Mammary epithelial cell (primary cell): ENCODE measurements at regions of chr11 and their contacts with region 1.

Region 1: DNA sequence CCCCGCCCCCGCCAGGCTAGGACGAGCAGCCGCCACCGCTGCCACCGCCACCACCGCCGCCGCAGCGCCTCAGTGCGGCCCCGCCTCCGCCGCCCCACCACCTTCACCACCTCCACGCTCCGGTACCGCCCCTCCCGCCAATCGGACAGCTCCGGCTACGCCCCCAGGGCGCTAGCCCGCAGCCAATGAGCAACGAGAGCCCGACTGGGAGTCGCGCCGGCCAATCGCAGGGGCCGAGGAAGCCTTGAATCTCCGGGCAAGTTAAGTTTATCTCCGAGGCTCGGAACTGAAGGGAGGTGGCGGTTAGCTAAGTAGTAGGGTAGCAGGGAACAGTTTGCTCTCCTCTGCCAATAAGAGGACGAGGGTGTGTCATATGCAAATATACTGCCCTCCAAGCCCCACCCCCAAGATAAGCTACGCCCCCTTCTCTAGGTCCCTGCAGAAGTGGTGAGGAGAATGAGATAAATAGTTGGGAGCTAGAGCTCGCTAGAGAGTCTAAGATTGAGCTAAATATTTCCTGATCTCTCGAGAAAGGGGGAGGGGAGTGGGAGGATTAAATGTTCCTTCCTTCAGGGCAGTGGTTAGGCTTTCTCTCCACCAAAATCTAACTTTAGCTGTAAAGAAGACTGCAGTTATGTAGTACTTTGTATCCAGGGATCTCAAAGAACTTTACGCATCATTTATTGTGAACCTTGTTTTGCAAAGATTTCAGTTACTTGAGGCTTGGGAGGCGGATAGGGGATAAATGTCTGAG is at the start of gene SESN3:
- DNase-seq: peak; percentile 100
- H3K4me3 ChIP-seq: peak within 1 kb of the TSS; percentile 73 to 93 (median 92)
- H3K27ac ChIP-seq: peak within 1 kb of the TSS; percentile 64
- H3K4me1 ChIP-seq: peaks cover 20% of the 10 kb centered on the region
- H3K27me3 ChIP-seq: no peaks in the 10 kb centered on the region
- CTCF ChIP-seq: peak in 1 of 2 donors; percentile 30
- total RNA-seq, gene SESN3: 36.5 to 184 TPM

Region 2: DNA sequence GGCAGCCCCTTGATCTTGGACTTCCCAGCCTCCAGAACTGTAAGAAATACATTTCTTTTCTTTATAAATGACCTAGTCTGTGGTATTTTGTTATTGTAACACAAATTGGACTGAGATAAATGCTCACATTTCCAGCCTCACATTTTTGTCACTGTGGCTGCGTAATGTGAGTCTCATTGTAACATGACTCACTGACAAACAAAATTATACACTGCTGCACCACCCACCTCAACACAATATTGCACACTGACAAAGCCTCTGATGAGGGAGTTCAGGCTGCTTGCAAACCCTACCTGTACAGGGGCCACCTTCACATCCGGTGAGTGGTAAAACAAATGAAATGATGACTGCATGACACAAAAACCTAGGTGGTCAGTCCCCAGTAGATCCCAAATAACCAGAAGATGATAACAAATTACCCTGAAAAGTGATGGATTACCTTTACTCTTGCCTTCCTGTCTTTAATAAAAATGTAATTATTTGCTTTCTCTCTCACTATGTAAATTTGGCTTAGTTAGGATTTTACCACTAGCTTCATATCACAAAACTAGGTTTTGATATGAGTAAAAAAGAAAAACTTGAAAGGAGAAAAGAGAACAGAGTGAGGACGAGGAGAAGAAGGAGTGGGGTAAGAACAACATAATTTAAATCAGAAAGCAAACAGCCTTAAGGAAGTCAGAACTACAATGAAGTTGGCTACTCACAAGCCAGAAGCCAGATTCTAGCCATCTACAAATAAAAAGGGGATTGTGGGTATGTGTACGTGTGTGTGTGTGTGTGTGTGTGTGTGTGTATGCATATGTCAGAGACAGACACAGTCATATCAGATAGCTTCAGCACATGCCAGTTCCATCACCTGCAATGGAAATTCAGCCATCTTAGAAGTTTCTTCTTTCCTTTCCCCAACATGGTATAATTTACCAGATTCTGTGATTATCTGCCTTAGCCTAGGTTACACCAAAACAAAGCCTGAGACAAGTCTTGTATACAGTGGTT is 53.1 kb after region 1 on chr11:
- CTCF ChIA-PET with region 1: no interaction called
- dilution Hi-C with region 1: no loop called
- in situ Hi-C with region 1: no loop called
- intact Hi-C with region 1: loop called (anchors 5 kb)
- DNase-seq: peak; percentile 36
- H3K4me3 ChIP-seq: no peak overlapping the region
- H3K27ac ChIP-seq: no peak overlapping the region
- H3K4me1 ChIP-seq: peaks cover 26% of the 10 kb centered on the region
- H3K27me3 ChIP-seq: no peaks in the 10 kb centered on the region
- CTCF ChIP-seq: no peak

Region 3: DNA sequence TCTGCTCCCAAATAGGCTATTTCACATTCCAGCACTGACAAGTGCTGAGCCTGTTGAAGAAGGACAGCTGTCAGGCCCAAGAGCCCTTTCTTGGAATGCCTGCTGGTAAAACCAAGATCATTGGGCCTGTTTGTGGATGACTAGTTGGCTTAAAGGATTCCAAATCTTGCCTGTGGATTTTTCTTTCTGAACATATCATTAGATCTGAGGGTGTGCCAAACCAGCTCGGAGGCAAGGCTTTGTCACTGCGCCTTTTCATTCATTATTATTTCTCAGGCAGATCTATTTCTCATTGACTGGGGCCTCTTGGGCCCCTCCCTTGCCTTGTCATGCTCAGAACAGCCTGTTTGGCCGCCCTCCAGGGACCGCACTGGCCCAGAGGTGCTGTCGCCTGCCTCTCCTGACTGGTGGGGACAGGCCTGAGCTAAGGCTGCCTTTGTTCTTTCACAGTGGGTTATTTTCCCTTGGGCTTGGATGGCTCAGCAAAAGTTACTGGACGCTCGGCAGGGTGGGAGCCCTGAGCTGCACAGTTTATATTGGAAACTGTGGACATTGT is 222.4 kb after region 1 on chr11:
- CTCF ChIA-PET with region 1: no interaction called
- dilution Hi-C with region 1: no loop called
- in situ Hi-C with region 1: no loop called
- intact Hi-C with region 1: loop called (anchors 2 kb)
- DNase-seq: peak; percentile 91
- H3K4me3 ChIP-seq: no peak overlapping the region
- H3K27ac ChIP-seq: peak overlapping the region; percentile 53
- H3K4me1 ChIP-seq: peaks cover 34% of the 10 kb centered on the region
- H3K27me3 ChIP-seq: no peaks in the 10 kb centered on the region
- CTCF ChIP-seq: peak in 1 of 2 donors; percentile 1

Region 4: DNA sequence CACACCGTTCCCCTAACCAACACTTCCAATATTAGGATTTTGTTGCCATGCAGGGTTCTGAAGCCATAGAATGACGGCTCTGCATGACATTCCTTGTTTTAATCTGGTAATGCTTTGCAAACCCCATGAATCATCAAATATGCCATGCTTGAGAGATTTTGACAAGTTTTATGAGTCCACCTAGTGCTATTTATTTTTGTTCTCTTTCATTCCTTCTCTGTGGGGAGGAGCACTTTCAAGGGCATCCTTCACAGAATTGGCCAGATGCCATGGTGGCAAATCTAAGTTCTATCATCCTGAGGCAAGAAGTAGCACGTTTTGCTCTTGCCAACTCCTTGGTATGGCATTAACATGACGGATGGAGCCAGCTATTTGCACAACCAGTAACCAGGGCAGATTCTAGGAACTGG is 289.8 kb after region 1 on chr11:
- CTCF ChIA-PET with region 1: no interaction called
- dilution Hi-C with region 1: no loop called
- in situ Hi-C with region 1: loop called in 1 of 2 experiments (anchors 10 kb)
- intact Hi-C with region 1: loop called (anchors 1 kb)
- DNase-seq: peak; percentile 93
- H3K4me3 ChIP-seq: no peak overlapping the region
- H3K27ac ChIP-seq: peak overlapping the region; percentile 87
- H3K4me1 ChIP-seq: peaks cover 48% of the 10 kb centered on the region
- H3K27me3 ChIP-seq: no peaks in the 10 kb centered on the region
- CTCF ChIP-seq: no peak

Region 5: DNA sequence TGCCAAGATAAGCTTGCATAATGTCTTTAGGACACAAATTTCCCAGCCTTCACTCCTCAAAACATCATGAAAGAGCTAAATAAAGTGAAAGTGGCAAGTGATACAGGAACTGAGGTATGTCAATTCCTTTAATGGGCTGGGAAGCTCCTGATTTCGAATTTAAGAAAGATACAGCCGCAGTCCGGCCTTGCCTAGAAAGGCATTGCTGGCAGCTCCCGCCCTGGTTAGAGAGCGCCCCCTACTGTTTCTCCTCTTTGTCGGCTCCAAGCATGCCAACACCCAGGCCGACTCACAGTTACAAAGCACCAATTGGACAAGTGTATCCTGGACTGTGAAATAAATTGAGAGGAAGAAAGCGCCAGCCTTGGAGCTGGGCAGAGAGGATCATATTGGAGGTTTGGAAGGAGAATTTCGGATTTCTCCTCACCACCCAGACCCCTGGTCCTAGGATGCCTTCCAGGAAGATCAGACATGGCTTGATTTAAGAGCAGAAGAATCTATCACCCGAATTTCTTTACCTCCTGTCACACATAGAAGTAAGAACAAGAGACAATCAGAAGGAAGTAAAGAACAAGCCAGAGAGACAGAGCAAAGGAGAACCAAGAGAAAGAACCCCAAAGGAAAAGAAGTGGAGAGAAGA is 474.3 kb after region 1 on chr11:
- CTCF ChIA-PET with region 1: interaction called, 17 read pairs
- dilution Hi-C with region 1: no loop called
- in situ Hi-C with region 1: no loop called
- intact Hi-C with region 1: loop called (anchors 1 kb)
- DNase-seq: peak; percentile 78
- H3K4me3 ChIP-seq: no peak overlapping the region
- H3K27ac ChIP-seq: no peak overlapping the region
- H3K4me1 ChIP-seq: peaks cover 3% of the 10 kb centered on the region
- H3K27me3 ChIP-seq: no peaks in the 10 kb centered on the region
- CTCF ChIP-seq: peak; percentile 99